Endothelial cell of umbilical vein (primary cell): ENCODE measurements at regions of chr11 and their contacts with region 1.

Region 1: DNA sequence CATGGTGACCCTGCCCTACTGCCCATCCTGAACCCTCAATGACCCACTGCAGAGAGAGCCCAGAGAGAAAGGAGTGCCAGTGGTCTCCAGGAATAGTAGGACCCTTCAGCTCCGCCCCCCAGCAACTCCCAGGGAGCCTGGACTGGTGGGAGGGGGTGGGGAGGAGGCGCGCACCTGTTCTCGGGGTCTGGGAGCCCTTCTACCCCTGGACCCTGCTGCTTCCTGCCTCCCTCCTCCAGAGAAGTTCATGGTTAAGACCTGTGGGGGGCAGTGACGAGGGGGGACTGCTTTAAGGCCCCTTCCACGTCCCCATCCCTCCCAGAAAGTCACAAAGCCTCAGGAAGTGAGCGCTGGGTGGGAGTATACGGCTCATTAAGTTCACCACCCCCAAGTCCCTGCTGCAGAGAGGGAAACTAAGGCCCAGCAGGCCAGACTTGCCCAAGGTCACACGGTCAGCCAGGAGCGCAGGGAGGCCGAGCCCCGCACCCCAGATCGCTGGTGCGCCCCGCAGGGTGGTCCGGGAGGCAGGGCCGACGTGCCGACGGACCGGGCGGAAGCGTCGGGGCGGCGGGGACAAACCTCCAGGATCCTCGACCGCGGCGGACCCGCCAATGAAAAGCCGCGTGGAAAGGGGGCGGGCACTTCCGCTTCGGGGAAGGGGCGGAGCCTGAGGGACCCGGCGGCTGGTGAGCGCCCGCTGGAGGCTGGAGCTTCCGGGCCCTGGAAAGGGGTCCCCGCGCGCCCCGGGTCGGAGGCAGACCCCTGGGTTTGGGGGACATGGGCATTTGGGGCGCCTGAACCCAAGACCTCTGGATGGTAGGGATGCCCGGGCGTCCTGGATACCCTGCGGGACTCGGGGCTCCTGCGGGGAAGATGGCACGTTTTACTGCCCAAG is at the starts of genes NUDT22 and TRPT1:
- DNase-seq: peak; percentile 83
- H3K4me3 ChIP-seq: peak within 1 kb of the TSS; percentile 62 to 70 (median 66)
- H3K27ac ChIP-seq: peak within 1 kb of the TSS; percentile 55
- H3K4me1 ChIP-seq: peaks cover 14% of the 10 kb centered on the region
- H3K27me3 ChIP-seq: no peaks in the 10 kb centered on the region
- CTCF ChIP-seq: peak; percentile 3 to 13
- POLR2A ChIP-seq: peak; percentile 90
- total RNA-seq, gene NUDT22: 37.1 and 37.8 TPM in 2 replicates
- total RNA-seq, gene TRPT1: 26.2 and 28.0 TPM in 2 replicates

Region 2: GRCh38 chr11:62905927-62906531 is 1319.8 kb before region 1 on chr11:
- CTCF ChIA-PET with region 1: no interaction called
- POLR2A ChIA-PET with region 1: no interaction called
- dilution Hi-C with region 1: no loop called
- intact Hi-C with region 1: no loop called
- DNase-seq: peak; percentile 86
- H3K4me3 ChIP-seq: no peak overlapping the region
- H3K27ac ChIP-seq: no peak overlapping the region
- H3K4me1 ChIP-seq: peaks cover 7% of the 10 kb centered on the region
- H3K27me3 ChIP-seq: peaks cover 0 to 2% of the 10 kb centered on the region in 2 experiments
- CTCF ChIP-seq: peak; percentile 97
- POLR2A ChIP-seq: no peak

Region 3: GRCh38 chr11:64240394-64241174 is 14.7 kb after region 1 on chr11 and contains the start of gene FKBP2:
- CTCF ChIA-PET with region 1: interaction called, 6 read pairs
- POLR2A ChIA-PET with region 1: interaction called, 3 read pairs
- dilution Hi-C with region 1: no loop called
- intact Hi-C with region 1: loop called (anchors 1 kb)
- DNase-seq: peak; percentile 97
- H3K4me3 ChIP-seq: peak within 1 kb of the TSS; percentile 67 to 93 (median 67)
- H3K27ac ChIP-seq: peak within 1 kb of the TSS; percentile 88
- H3K4me1 ChIP-seq: peaks cover 15% of the 10 kb centered on the region
- H3K27me3 ChIP-seq: no peaks in the 10 kb centered on the region
- CTCF ChIP-seq: no peak
- POLR2A ChIP-seq: peak; percentile 1
- total RNA-seq, gene FKBP2: 48.4 and 48.5 TPM in 2 replicates

Region 4: GRCh38 chr11:64369440-64370211 is 143.8 kb after region 1 on chr11:
- CTCF ChIA-PET with region 1: no interaction called
- POLR2A ChIA-PET with region 1: no interaction called
- dilution Hi-C with region 1: no loop called
- intact Hi-C with region 1: no loop called
- DNase-seq: no peak
- H3K4me3 ChIP-seq: no peak overlapping the region
- H3K27ac ChIP-seq: no peak overlapping the region
- H3K4me1 ChIP-seq: no peaks in the 10 kb centered on the region
- H3K27me3 ChIP-seq: no peaks in the 10 kb centered on the region
- CTCF ChIP-seq: no peak
- POLR2A ChIP-seq: no peak